ENCODE measurements at regions of chr1 and their contacts with region 1.

Region 1: DNA sequence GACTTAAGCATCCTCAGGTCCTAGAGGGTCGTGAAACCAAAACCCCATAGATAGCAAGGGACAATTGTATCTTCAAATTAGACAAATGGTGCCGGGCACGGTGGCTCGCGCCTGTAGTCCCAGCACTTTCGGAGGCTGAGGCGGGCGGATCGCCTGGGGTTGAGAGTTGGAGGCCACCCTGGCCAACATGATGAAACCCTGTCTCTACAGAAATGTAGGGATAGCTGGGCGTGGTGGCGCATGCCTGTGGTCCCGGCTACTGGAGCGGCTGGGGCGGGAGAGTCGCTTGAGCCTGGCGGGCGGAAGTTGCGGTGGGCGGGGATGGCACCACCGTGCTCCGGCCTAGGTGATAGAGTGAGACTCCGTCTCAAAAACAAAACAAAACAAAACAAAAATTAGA is 780.6 kb downstream of the BRINP3 start:
- DNase-seq: no peak
- H3K4me3 ChIP-seq: no peak overlapping the region
- H3K27ac ChIP-seq: no peak overlapping the region
- H3K4me1 ChIP-seq: no peaks in the 10 kb centered on the region
- H3K27me3 ChIP-seq: no peaks in the 10 kb centered on the region
- CTCF ChIP-seq: no peak

Region 2: DNA sequence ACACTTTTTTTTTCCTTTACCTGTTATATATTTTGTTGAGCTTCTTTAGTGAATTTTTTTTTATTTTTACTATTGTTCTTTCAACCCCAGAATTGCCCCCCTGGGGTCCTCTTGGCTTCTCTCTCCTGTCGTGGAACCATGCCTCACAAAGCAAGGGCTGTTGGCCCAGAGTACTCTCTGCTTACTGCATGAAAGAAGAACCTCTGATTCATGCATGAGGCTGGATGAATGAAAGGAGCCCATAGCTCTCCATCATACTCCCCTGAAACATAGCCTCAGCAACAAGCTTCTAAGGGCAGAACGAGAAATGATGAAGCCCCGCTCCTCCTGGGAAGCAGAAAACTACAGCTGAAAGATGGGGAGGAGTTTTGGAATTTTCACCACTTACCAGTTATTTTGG is 660.5 kb before region 1 on chr1:
- CTCF ChIA-PET with region 1: no interaction called
- POLR2A ChIA-PET with region 1: no interaction called
- intact Hi-C with region 1: no loop called
- DNase-seq: no peak
- H3K4me3 ChIP-seq: no peak overlapping the region
- H3K27ac ChIP-seq: no peak overlapping the region
- H3K4me1 ChIP-seq: no peaks in the 10 kb centered on the region
- H3K27me3 ChIP-seq: no peaks in the 10 kb centered on the region
- CTCF ChIP-seq: no peak

Region 3: DNA sequence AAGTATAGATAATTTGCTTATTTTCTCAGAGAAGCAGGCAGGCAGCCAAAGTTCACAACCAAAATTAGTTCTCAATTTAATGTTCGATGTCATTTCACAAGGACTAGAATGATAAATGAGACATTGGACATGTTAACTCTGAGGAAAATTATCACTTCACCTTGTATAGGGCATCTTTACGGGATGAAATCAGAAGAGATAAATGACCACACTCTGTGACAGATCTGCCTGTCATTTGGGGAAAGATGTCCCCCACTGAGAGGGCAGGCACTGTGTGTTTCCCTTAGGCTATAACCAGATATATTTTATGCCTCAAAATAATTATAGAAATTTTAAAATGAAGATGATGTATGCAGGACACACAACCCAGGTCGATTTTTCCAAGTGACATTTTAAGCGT is 137.7 kb after region 1 on chr1:
- CTCF ChIA-PET with region 1: interaction called, 11 read pairs
- POLR2A ChIA-PET with region 1: no interaction called
- intact Hi-C with region 1: no loop called
- DNase-seq: no peak
- H3K4me3 ChIP-seq: no peak overlapping the region
- H3K27ac ChIP-seq: no peak overlapping the region
- H3K4me1 ChIP-seq: no peaks in the 10 kb centered on the region
- H3K27me3 ChIP-seq: no peaks in the 10 kb centered on the region
- CTCF ChIP-seq: no peak